A673 (cell line): ENCODE measurements at regions of chrX and their contacts with region 1.

Region 1: GRCh38 chrX:75603833-75604232 is 81.0 kb upstream of the ZDHHC15 start:
- DNase-seq: peak; percentile 18
- H3K4me3 ChIP-seq: no peak overlapping the region
- H3K27ac ChIP-seq: no peak overlapping the region
- H3K4me1 ChIP-seq: no peaks in the 10 kb centered on the region
- H3K27me3 ChIP-seq: no peaks in the 10 kb centered on the region
- CTCF ChIP-seq: peak; percentile 63

Region 2: DNA sequence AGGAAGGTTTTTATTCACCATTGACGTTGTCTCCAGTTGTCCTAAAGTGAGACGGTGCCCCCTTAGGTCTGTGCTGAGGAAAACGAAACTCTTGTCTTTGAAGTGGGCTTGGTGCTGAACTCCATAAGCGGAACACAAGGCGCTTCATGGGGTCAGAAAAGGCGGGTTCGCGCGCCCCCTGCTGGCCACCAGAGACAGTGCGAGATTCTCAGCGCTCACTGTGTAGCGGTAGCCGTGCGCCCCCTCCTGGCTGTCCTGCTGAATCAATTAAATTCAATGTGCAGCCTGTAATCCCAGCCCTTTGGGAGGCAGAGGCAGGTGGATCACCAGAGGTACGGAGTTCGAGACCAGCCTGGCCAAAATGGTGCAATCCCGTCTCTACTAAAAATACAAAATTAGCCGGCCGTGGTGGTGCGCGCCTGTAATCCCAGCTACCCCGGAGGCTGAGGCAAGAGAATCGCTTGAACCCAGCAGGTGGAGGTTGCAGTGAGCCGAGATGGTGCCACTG is 1053.5 kb before region 1 on chrX:
- CTCF ChIA-PET with region 1: no interaction called
- POLR2A ChIA-PET with region 1: no interaction called
- intact Hi-C with region 1: loop called (anchors 5 kb)
- DNase-seq: peak; percentile 82
- H3K4me3 ChIP-seq: no peak overlapping the region
- H3K27ac ChIP-seq: no peak overlapping the region
- H3K4me1 ChIP-seq: no peaks in the 10 kb centered on the region
- H3K27me3 ChIP-seq: no peaks in the 10 kb centered on the region
- CTCF ChIP-seq: peak; percentile 99

Region 3: DNA sequence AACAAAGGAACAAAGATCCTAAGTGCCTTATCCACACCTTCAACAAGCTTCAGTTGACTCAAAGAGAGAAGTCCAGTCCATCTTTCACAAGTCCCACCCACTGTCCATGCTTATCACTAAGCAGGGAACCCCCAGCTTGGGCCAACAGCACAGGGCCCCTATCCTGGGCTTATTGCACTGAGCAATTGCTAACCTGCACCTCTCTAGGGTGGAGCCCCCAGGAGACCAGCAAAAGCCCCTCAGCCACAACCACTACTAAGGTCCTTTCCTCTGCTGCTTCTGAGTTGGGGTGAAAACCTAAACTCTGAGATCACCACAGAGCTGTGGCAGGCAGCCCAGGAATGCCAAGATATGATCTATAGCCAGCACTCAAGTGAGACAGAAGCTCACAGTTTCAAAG is 472.3 kb after region 1 on chrX:
- CTCF ChIA-PET with region 1: no interaction called
- POLR2A ChIA-PET with region 1: no interaction called
- intact Hi-C with region 1: no loop called
- DNase-seq: no peak
- H3K4me3 ChIP-seq: no peak overlapping the region
- H3K27ac ChIP-seq: no peak overlapping the region
- H3K4me1 ChIP-seq: no peaks in the 10 kb centered on the region
- H3K27me3 ChIP-seq: no peaks in the 10 kb centered on the region
- CTCF ChIP-seq: no peak